CD14-positive monocyte (primary cell): ENCODE measurements at regions of chr2 and their contacts with region 1.

Region 1: GRCh38 chr2:78676921-78677696 is 348.4 kb upstream of the REG3G start:
- DNase-seq: peak in 1 of 3 donors; percentile 22
- H3K4me3 ChIP-seq: no peak overlapping the region
- H3K4me3 Mint-ChIP-seq: no peak overlapping the region
- H3K27ac ChIP-seq: no peak overlapping the region
- H3K27ac Mint-ChIP-seq: peak overlapping the region in 2 of 7 donors; percentile 8 to 20
- H3K4me1 ChIP-seq: peaks cover 8 to 10% of the 10 kb centered on the region in 2 donors
- H3K4me1 Mint-ChIP-seq: peaks cover 5% of the 10 kb centered on the region
- H3K27me3 ChIP-seq: no peaks in the 10 kb centered on the region
- H3K27me3 Mint-ChIP-seq: peaks cover 0 to 3% (median 3%) of the 10 kb centered on the region in 3 donors
- CTCF ChIP-seq: no peak

Region 2: DNA sequence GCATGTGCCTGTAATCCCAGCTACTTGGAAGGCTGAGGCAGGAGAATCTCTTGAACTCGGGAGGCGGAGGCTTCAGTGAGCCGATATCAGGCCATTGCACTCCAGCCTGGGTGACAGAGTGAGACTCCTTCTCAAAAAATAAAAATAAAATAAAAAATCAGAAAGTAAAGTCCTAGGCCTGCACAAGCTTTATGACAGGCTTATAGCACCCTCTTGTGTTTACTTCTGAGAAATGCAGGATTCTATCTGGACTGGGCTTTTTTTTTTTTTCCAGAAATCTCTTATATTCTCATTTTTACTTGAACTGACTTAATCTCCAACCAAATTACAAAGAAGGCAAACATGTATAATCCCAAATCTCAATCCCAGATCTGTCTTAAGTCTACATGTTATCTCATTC is 322.3 kb after region 1 on chr2:
- intact Hi-C with region 1: loop called in 1 of 2 experiments (anchors 5 kb)
- DNase-seq: no peak
- H3K4me3 ChIP-seq: no peak overlapping the region
- H3K4me3 Mint-ChIP-seq: no peak overlapping the region
- H3K27ac ChIP-seq: no peak overlapping the region
- H3K27ac Mint-ChIP-seq: peak overlapping the region in 1 of 7 donors; percentile 75
- H3K4me1 ChIP-seq: no peaks in the 10 kb centered on the region
- H3K4me1 Mint-ChIP-seq: peaks cover 2% of the 10 kb centered on the region
- H3K27me3 ChIP-seq: peaks cover 8 to 13% of the 10 kb centered on the region in 2 donors
- H3K27me3 Mint-ChIP-seq: peaks cover 8 to 13% (median 8%) of the 10 kb centered on the region in 3 donors
- CTCF ChIP-seq: peak; percentile 39